K562 (cell line): ENCODE measurements at regions of chr3 and their contacts with region 1.

Region 1: GRCh38 chr3:47989981-47990440 is 26.2 kb downstream of the MAP4 start:
- DNase-seq: peak; percentile 78 to 89 (median 82)
- ATAC-seq: peak; percentile 98
- H3K4me3 ChIP-seq: no peak overlapping the region
- H3K27ac ChIP-seq: no peak overlapping the region
- H3K4me1 ChIP-seq: peaks cover 0 to 2% of the 10 kb centered on the region in 2 experiments; a peak in 1 of 5 replicates
- H3K27me3 ChIP-seq: no peaks in the 10 kb centered on the region
- CTCF ChIP-seq: peak; percentile 84 to 98 (median 97)
- EP300 ChIP-seq: no peak
- POLR2A ChIP-seq: no peak
- RAD21 ChIP-seq: peak; percentile 88 to 92

Region 2: GRCh38 chr3:47347217-47347801 is 642.7 kb before region 1 on chr3:
- CTCF ChIA-PET with region 1: no interaction called
- POLR2A ChIA-PET with region 1: no interaction called
- in situ Hi-C with region 1: no loop called
- intact Hi-C with region 1: no loop called
- DNase-seq: peak; percentile 68 to 80 (median 72)
- ATAC-seq: peak; percentile 78
- H3K4me3 ChIP-seq: no peak overlapping the region
- H3K27ac ChIP-seq: peak overlapping the region; percentile 46; the same call in 2 of the 3 replicates
- H3K4me1 ChIP-seq: peaks cover 18 to 24% of the 10 kb centered on the region in 2 experiments
- H3K27me3 ChIP-seq: no peaks in the 10 kb centered on the region
- CTCF ChIP-seq: no peak
- EP300 ChIP-seq: peak; percentile 84
- POLR2A ChIP-seq: no peak; the same call in 1 of the 2 replicates
- RAD21 ChIP-seq: no peak

Region 3: GRCh38 chr3:47849699-47850563 is 140.1 kb before region 1 on chr3:
- CTCF ChIA-PET with region 1: no interaction called
- POLR2A ChIA-PET with region 1: no interaction called
- in situ Hi-C with region 1: no loop called
- intact Hi-C with region 1: loop called (anchors 1 kb)
- DNase-seq: peak in 2 of 4 experiments; percentile 46 to 60
- ATAC-seq: peak; percentile 85
- H3K4me3 ChIP-seq: no peak overlapping the region
- H3K27ac ChIP-seq: no peak overlapping the region
- H3K4me1 ChIP-seq: peaks cover 0 to 30% of the 10 kb centered on the region in 2 experiments; a peak in 1 of 5 replicates
- H3K27me3 ChIP-seq: no peaks in the 10 kb centered on the region
- CTCF ChIP-seq: peak; percentile 67 to 80 (median 68)
- EP300 ChIP-seq: no peak
- POLR2A ChIP-seq: no peak
- RAD21 ChIP-seq: peak in 1 of 2 experiments; percentile 44; a peak in 2 of 4 replicates